ENCODE measurements at regions of chr10 and their contacts with region 1.

Region 1: DNA sequence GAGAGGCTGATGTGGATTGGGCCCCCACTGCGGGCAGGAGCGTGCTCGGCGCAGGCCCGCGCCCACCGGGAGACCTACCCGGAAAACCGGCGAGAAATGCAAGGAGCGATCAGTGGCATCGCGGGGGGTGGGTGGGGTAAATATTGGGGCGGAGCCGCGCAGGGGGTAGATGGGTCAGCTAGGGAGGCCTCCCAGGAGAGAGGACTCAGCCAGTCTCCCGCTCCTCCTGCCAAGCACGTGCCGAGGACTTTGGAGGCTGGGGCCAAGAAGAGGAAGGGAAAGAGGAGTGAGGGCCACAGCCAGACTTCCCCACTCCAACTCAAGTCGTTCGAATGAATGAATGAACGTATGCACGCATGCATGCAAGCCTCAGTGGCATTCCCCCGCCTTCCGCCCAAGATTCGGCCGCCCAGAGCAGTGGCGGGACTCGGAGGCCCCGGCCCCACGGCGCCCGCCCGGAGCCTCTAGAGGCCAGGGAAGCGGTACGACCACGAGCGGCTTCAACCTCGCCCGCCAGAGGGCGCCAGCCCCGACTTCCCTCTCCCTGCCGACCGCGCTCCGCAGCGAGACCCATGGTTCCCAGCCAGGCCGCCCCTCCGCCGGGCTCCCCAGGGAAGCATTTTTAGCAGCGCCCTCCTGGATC is 3.6 kb downstream of the NPM3 start:
- DNase-seq: peak; percentile 89
- ATAC-seq: peak; percentile 78

Region 2: GRCh38 chr10:100986952-100987750 is 792.5 kb before region 1 on chr10 and contains the starts of genes MRPL43 and TWNK:
- intact Hi-C with region 1: no loop called
- DNase-seq: peak; percentile 93
- ATAC-seq: peak; percentile 94
- total RNA-seq, gene MRPL43: 84.8 TPM
- total RNA-seq, gene TWNK: 5.9 TPM

Region 3: GRCh38 chr10:101609481-101609880 is 170.2 kb before region 1 on chr10:
- intact Hi-C with region 1: loop called (anchors 5 kb)
- DNase-seq: no peak
- ATAC-seq: no peak

Region 4: GRCh38 chr10:101710059-101710695 is 69.5 kb before region 1 on chr10:
- intact Hi-C with region 1: no loop called
- DNase-seq: no peak
- ATAC-seq: no peak

Region 5: GRCh38 chr10:101736666-101737065 is 43.0 kb before region 1 on chr10:
- intact Hi-C with region 1: no loop called
- DNase-seq: no peak
- ATAC-seq: no peak

Region 6: DNA sequence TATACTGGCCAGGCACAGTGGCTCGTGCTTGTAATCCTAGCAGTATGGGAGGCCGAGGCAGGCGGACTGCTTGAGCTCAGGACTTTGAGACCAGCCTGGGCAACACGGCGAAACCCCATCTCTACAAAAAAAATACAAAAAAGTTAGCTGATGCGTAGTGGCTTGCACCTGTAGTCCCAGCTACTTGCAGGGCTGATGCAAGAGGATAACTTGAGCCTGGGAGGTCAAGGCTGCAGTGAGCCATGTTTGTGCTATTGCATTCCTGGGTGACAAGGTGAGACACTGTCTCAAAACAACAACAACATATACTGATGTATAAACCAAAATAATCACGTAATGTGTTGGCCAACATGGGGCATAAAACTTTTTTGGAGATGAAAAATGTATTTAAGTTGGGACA is 10.0 kb after region 1 on chr10:
- intact Hi-C with region 1: loop called (anchors 2 kb)
- DNase-seq: no peak
- ATAC-seq: no peak

Region 7: GRCh38 chr10:102175415-102175814 is 395.8 kb after region 1 on chr10:
- intact Hi-C with region 1: no loop called
- DNase-seq: no peak
- ATAC-seq: no peak

Measured in sciatic nerve (tissue), 2 donors.